Kidney (tissue), 22 donors: ENCODE measurements at regions of chr19 and their contacts with region 1.

Region 1: DNA sequence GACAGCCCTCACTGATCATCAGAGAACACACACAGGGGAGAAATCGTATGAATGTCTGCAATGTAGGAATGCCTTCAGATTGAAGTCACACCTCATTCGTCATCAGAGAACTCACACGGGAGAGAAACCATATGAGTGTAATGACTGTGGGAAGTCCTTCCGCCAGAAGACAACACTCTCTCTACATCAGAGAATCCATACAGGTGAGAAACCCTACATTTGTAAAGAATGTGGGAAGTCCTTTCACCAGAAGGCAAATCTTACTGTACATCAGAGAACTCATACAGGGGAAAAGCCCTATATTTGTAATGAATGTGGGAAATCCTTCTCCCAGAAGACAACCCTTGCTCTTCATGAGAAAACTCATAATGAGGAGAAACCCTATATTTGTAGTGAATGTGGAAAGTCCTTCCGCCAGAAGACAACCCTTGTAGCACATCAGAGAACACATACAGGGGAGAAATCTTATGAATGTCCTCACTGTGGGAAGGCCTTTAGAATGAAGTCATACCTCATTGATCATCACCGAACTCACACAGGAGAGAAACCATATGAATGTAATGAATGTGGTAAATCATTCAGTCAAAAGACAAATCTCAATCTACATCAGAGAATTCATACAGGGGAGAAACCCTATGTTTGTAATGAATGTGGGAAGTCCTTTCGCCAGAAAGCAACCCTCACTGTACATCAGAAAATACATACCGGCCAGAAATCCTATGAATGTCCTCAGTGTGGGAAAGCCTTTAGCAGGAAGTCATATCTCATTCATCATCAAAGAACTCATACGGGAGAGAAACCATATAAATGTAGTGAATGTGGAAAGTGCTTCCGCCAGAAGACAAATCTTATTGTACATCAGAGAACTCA is 32.5 kb downstream of the ZNF567 start:
- DNase-seq: no peak
- H3K4me3 ChIP-seq: peak overlapping the region in 2 of 3 donors; percentile 6 to 8
- H3K27ac ChIP-seq: no peak overlapping the region
- H3K4me1 ChIP-seq: no peaks in the 10 kb centered on the region
- H3K27me3 ChIP-seq: no peaks in the 10 kb centered on the region
- CTCF ChIP-seq: no peak

Region 2: GRCh38 chr19:36627057-36627456 is 92.9 kb before region 1 on chr19:
- intact Hi-C with region 1: loop called (anchors 10 kb)
- DNase-seq: no peak
- H3K4me3 ChIP-seq: peak overlapping the region in 1 of 3 donors; percentile 8
- H3K27ac ChIP-seq: no peak overlapping the region
- H3K4me1 ChIP-seq: no peaks in the 10 kb centered on the region
- H3K27me3 ChIP-seq: no peaks in the 10 kb centered on the region
- CTCF ChIP-seq: no peak

Region 3: GRCh38 chr19:36665832-36666231 is 54.1 kb before region 1 on chr19:
- intact Hi-C with region 1: no loop called
- DNase-seq: no peak
- H3K4me3 ChIP-seq: peak overlapping the region; percentile 89 to 99 (median 98)
- H3K27ac ChIP-seq: no peak overlapping the region
- H3K4me1 ChIP-seq: peaks cover 0 to 10% (median 4%) of the 10 kb centered on the region in 3 donors
- H3K27me3 ChIP-seq: no peaks in the 10 kb centered on the region
- CTCF ChIP-seq: no peak

Region 4: DNA sequence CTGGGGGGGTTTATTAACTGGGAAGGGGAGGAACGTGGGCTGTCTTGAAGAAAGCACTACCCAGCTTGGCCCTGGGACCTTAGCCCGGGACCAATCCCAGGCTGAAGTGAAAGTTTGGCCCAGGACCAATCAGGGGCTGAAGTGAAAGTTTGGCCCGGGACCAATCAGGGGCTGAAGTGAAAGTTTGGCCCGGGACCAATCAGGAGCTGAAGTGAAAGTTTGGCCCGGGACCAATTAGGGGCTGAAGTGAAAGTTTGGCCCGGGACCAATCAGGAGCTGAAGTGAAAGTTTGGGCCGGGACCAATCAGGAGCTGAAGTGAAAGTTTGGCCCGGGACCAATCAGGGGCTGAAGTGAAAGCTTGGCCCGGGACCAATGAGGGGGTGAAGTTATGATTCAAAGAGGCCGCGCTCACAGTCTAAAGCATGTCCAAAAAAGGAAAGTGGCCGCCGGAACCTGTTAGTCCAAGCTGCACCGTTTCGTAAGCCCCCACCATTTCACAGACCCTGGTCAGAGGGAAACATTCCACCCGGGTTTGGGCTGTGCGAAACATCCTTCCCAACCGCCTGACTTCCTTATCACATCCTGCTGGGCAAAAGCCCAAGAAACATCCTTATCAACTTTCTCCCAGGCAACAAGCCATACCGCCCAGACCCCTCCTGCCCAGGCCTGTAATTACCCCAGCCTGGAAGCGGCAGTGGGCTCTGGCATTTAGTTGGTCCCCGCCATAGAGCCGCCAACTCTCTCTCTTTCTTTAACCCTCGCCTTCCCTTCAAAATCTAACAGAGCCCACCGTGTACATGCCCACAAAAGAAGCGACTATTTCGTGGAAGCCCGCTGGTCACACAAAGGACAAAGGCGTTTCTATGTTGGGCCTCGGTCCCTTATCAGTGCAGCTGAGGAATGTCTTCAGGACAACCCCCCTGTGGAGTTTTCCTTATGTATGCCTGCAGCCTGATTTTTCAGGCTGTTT is 51.6 kb after region 1 on chr19:
- intact Hi-C with region 1: no loop called
- DNase-seq: peak; percentile 76 to 95 (median 83)
- H3K4me3 ChIP-seq: peak overlapping the region; percentile 83 to 98 (median 97)
- H3K27ac ChIP-seq: peak overlapping the region; percentile 72 to 93
- H3K4me1 ChIP-seq: peaks cover 0 to 8% (median 7%) of the 10 kb centered on the region in 3 donors
- H3K27me3 ChIP-seq: no peaks in the 10 kb centered on the region
- CTCF ChIP-seq: no peak